MCF 10A (cell line): ENCODE measurements at regions of chr11 and their contacts with region 1.

Region 1: GRCh38 chr11:101008961-101009689 is 120.5 kb downstream of the PGR start:
- DNase-seq: no peak
- H3K4me3 Mint-ChIP-seq: no peak overlapping the region
- H3K27ac Mint-ChIP-seq: no peak overlapping the region
- H3K4me1 Mint-ChIP-seq: no peaks in the 10 kb centered on the region
- H3K27me3 Mint-ChIP-seq: no peaks in the 10 kb centered on the region
- CTCF ChIP-seq: no peak

Region 2: GRCh38 chr11:100240025-100240539 is 769.0 kb before region 1 on chr11:
- CTCF ChIA-PET with region 1: no interaction called
- POLR2A ChIA-PET with region 1: no interaction called
- intact Hi-C with region 1: no loop called
- DNase-seq: no peak
- H3K4me3 Mint-ChIP-seq: no peak overlapping the region
- H3K27ac Mint-ChIP-seq: no peak overlapping the region
- H3K4me1 Mint-ChIP-seq: no peaks in the 10 kb centered on the region
- H3K27me3 Mint-ChIP-seq: no peaks in the 10 kb centered on the region
- CTCF ChIP-seq: no peak

Region 3: DNA sequence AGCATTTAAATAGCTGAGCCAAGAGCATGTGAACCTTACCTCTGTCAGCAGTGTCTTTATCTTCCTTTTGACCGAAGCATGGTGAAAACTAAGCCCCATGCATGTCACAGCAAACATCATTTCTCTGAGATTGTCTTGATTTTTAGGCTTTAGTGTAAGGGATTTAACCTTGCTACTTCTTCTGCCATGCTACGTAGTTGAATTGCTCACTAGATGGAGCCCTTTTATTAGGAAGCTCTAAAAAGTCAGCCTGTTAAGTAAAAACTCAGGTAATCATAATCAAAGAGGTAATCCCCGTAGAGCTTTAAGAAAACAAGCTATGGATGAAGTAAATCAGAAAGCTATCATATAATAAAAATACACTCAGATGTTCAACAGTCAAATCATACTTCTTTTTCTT is 29.0 kb before region 1 on chr11:
- CTCF ChIA-PET with region 1: interaction called, 10 read pairs
- POLR2A ChIA-PET with region 1: interaction called, 3 read pairs
- intact Hi-C with region 1: no loop called
- DNase-seq: peak; percentile 30
- H3K4me3 Mint-ChIP-seq: no peak overlapping the region
- H3K27ac Mint-ChIP-seq: no peak overlapping the region
- H3K4me1 Mint-ChIP-seq: no peaks in the 10 kb centered on the region
- H3K27me3 Mint-ChIP-seq: no peaks in the 10 kb centered on the region
- CTCF ChIP-seq: no peak